ENCODE measurements at regions of chr6 and their contacts with region 1.

Region 1: GRCh38 chr6:12233693-12234571 is 56.2 kb upstream of the EDN1 start:
- DNase-seq: peak; percentile 67
- ATAC-seq: peak; percentile 81
- H3K4me3 ChIP-seq: no peak overlapping the region
- H3K27ac ChIP-seq: no peak overlapping the region
- H3K4me1 ChIP-seq: peaks cover 27% of the 10 kb centered on the region
- H3K27me3 ChIP-seq: no peaks in the 10 kb centered on the region
- CTCF ChIP-seq: peak; percentile 67
- EP300 ChIP-seq: no peak
- POLR2A ChIP-seq: no peak
- RAD21 ChIP-seq: peak; percentile 78

Region 2: DNA sequence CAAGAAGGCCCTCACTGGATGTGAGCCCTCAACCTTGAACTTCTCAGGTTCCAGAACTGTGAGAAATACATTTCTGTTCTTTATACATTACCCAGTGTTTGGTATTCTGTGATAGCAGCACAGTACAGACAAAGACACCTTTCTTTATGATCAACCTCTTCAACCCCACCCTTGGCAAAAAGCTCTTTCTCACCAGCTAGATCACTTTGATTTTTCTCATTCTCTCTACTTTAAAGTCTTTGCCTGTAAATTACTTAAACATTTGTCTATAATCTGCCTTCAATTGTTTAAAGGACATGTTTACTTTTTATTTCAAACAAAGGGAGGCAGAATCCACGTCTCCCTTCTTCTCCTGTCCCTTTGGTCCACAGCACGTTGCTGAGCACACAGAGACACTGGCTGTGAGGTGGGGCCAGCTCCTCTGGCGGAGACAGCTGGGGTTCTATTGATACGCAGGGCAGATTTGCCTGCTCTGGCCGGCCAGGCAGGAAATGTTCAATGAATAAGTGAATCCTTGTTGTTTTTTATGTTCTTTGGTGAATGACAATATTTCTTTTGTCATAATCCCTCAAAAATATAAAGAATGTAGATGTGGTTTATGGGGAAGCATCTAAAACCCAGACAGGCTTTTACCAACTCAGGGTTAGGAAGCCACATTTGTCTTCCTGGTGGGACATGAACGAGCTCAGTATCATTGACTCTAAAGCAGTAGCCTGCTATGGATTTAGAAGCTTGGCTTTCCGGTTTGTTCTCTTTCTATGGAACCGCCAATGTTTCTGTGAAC is 1054.3 kb before region 1 on chr6:
- CTCF ChIA-PET with region 1: no interaction called
- POLR2A ChIA-PET with region 1: no interaction called
- in situ Hi-C with region 1: no loop called
- intact Hi-C with region 1: no loop called
- DNase-seq: peak; percentile 79
- ATAC-seq: peak; percentile 77
- H3K4me3 ChIP-seq: no peak overlapping the region
- H3K27ac ChIP-seq: peak overlapping the region; percentile 11
- H3K4me1 ChIP-seq: peaks cover 40% of the 10 kb centered on the region
- H3K27me3 ChIP-seq: no peaks in the 10 kb centered on the region
- CTCF ChIP-seq: no peak
- EP300 ChIP-seq: 0 out of 4 replicates have a peak, but pooled peaks of 1 of the 2 experiments have one; percentile 29
- POLR2A ChIP-seq: no peak
- RAD21 ChIP-seq: no peak

Region 3: DNA sequence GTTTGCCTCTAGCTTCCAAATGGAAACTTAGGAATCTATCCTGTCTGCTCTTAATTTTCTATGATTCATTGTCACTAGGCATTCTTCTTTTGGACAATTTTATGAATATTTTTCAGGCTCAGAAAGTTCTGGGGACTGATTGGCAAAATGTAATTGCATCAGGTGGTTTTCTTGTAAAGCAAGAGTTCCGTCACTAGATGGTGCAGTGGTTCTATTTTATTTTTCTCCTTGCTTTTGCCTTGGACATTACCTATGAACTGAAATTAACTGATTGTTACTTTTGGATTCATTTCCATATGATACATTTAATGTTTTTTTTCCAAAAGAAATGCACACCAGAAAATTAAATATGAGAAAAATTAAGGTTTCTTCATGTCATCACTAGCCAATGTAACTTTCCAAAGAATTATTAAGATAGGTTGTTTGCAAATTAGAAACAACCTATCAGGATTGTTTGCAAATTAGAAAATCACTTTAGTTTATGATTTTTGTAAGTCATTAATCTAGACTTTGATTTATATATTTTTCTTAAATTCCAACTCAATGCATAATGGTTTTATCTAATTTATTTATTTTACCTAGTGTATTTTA is 648.4 kb before region 1 on chr6:
- CTCF ChIA-PET with region 1: interaction called, 5 read pairs
- POLR2A ChIA-PET with region 1: no interaction called
- in situ Hi-C with region 1: loop called (anchors 10 kb)
- intact Hi-C with region 1: loop called (anchors 5 kb)
- DNase-seq: peak; percentile 55
- ATAC-seq: peak; percentile 62
- H3K4me3 ChIP-seq: no peak overlapping the region
- H3K27ac ChIP-seq: no peak overlapping the region
- H3K4me1 ChIP-seq: peaks cover 13% of the 10 kb centered on the region
- H3K27me3 ChIP-seq: no peaks in the 10 kb centered on the region; a peak in 1 of 5 replicates
- CTCF ChIP-seq: peak; percentile 74
- EP300 ChIP-seq: no peak
- POLR2A ChIP-seq: no peak
- RAD21 ChIP-seq: peak; percentile 51; the same call in 1 of the 2 replicates

Region 4: GRCh38 chr6:11822346-11822745 is 411.6 kb before region 1 on chr6:
- CTCF ChIA-PET with region 1: no interaction called
- POLR2A ChIA-PET with region 1: no interaction called
- in situ Hi-C with region 1: no loop called
- intact Hi-C with region 1: loop called (anchors 1 kb)
- DNase-seq: no peak
- ATAC-seq: peak; percentile 36; the same call in 1 of the 3 replicates
- H3K4me3 ChIP-seq: no peak overlapping the region
- H3K27ac ChIP-seq: no peak overlapping the region
- H3K4me1 ChIP-seq: no peaks in the 10 kb centered on the region
- H3K27me3 ChIP-seq: 0 out of 5 replicates have a peak, but pooled peaks cover 0 to 3% of the 10 kb centered on the region in 2 experiments
- CTCF ChIP-seq: peak; percentile 46
- EP300 ChIP-seq: no peak
- POLR2A ChIP-seq: no peak
- RAD21 ChIP-seq: no peak

Region 5: GRCh38 chr6:12150812-12151432 is 83.0 kb before region 1 on chr6:
- CTCF ChIA-PET with region 1: interaction called, 6 read pairs
- POLR2A ChIA-PET with region 1: no interaction called
- in situ Hi-C with region 1: loop called (anchors 5 kb)
- intact Hi-C with region 1: loop called (anchors 1 kb)
- DNase-seq: peak; percentile 38
- ATAC-seq: peak; percentile 90
- H3K4me3 ChIP-seq: no peak overlapping the region
- H3K27ac ChIP-seq: no peak overlapping the region
- H3K4me1 ChIP-seq: no peaks in the 10 kb centered on the region
- H3K27me3 ChIP-seq: no peaks in the 10 kb centered on the region
- CTCF ChIP-seq: peak; percentile 81
- EP300 ChIP-seq: no peak
- POLR2A ChIP-seq: no peak
- RAD21 ChIP-seq: peak; percentile 70

Region 6: DNA sequence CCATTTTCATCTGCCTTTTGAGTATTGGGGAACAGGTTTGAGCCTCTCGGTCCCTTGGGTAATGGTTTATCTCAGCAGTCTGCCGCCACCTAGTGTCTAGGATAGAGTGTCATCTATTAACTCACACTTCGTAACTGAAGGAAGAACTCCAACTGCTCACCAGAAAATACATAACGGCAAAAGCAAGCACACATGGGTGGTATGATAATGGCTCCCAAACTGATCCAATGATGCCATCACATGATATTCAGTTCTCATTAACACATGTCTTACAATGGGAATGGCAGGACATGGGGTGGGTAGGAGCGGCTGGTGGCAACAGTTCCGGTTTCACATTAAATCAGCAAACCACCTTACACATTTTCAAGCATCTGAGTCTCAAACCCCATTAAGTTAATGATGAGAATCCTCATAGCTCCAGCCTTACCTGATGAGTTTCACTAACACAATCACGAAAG is 372.0 kb after region 1 on chr6:
- CTCF ChIA-PET with region 1: interaction called, 4 read pairs
- POLR2A ChIA-PET with region 1: no interaction called
- in situ Hi-C with region 1: no loop called
- intact Hi-C with region 1: loop called (anchors 5 kb)
- DNase-seq: peak; percentile 72
- ATAC-seq: peak; percentile 97
- H3K4me3 ChIP-seq: no peak overlapping the region
- H3K27ac ChIP-seq: no peak overlapping the region
- H3K4me1 ChIP-seq: no peaks in the 10 kb centered on the region
- H3K27me3 ChIP-seq: no peaks in the 10 kb centered on the region
- CTCF ChIP-seq: peak; percentile 93
- EP300 ChIP-seq: no peak
- POLR2A ChIP-seq: no peak
- RAD21 ChIP-seq: peak; percentile 76